T-cell (primary cell): ENCODE measurements at regions of chr2 and their contacts with region 1.

Region 1: GRCh38 chr2:177239932-177240630 is 24.4 kb downstream of the NFE2L2 start:
- DNase-seq: peak in 21 of 35 experiments; percentile 8 to 66 (median 22)
- ATAC-seq: peak; percentile 63 to 79 (median 75)
- H3K4me3 ChIP-seq: no peak overlapping the region
- H3K4me3 Mint-ChIP-seq: peak overlapping the region; percentile 43 to 60 (median 49)
- H3K27ac ChIP-seq: peak overlapping the region; percentile 72
- H3K27ac Mint-ChIP-seq: peak overlapping the region; percentile 85 to 88
- H3K4me1 ChIP-seq: peaks cover 40 to 42% of the 10 kb centered on the region in 2 experiments
- H3K4me1 Mint-ChIP-seq: peaks cover 84 to 94% (median 86%) of the 10 kb centered on the region in 3 donors
- H3K27me3 ChIP-seq: no peaks in the 10 kb centered on the region
- H3K27me3 Mint-ChIP-seq: no peaks in the 10 kb centered on the region

Region 2: DNA sequence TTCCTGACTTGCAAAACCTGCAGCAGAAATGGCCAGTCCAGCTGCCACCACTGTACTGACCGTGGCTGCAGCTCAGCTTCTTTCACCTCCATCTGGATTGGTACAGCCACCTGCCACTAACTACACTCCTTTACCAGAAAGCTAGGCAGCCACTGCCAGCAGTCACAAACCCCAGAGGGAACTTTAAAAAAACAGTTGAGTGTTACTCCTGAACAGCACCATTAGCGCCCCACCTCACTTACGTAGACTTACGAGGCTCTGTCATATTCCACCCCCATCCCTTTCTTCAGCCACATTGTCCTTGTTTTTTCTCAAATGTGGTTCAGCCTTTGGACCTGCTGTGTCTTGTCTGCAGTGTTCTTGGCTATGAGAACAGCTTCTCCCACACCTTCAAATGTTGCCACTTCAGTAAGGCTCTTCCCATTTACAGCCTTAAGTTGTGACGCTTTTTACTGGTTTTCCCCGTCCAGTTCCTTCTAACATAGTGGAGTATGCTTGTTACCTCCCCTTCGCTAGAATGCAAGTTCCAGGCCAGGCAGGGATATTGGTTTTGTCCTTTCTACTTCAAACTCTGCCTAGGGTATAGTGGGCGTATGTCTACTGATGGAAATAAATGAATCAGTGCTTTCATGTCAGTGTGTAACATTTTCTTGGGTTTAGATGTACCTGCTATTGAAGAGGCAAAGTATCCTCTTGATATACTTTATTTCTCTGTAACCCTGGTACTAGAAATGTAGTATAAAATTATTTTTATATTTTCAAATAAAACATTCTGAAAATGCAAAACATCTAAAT is 10.4 kb before region 1 on chr2:
- CTCF ChIA-PET with region 1: interaction called, 5 to 9 read pairs
- POLR2A ChIA-PET with region 1: interaction called, 5 to 17 read pairs
- DNase-seq: no peak
- ATAC-seq: peak in 3 of 4 experiments; percentile 12 to 19 (median 15)
- H3K4me3 ChIP-seq: no peak overlapping the region
- H3K4me3 Mint-ChIP-seq: no peak overlapping the region
- H3K27ac ChIP-seq: no peak overlapping the region
- H3K27ac Mint-ChIP-seq: peak overlapping the region; percentile 33 to 40
- H3K4me1 ChIP-seq: no peaks in the 10 kb centered on the region
- H3K4me1 Mint-ChIP-seq: peaks cover 47 to 49% (median 49%) of the 10 kb centered on the region in 3 donors
- H3K27me3 ChIP-seq: no peaks in the 10 kb centered on the region
- H3K27me3 Mint-ChIP-seq: no peaks in the 10 kb centered on the region